ENCODE measurements at regions of chr1 and their contacts with region 1.

Region 1: GRCh38 chr1:27603681-27604578 is at the start of gene AHDC1:
- DNase-seq: peak; percentile 91 to 93
- ATAC-seq: peak; percentile 51 to 80 (median 69)
- H3K4me3 ChIP-seq: peak within 1 kb of the TSS; percentile 42 to 100 (median 93)
- H3K27ac ChIP-seq: peak within 1 kb of the TSS; percentile 89 to 100 (median 96)
- H3K4me1 ChIP-seq: peaks cover 26 to 77% (median 58%) of the 10 kb centered on the region in 9 donors
- H3K27me3 ChIP-seq: peaks cover 0 to 4% (median 0%) of the 10 kb centered on the region in 7 donors
- CTCF ChIP-seq: peak in 4 of 9 donors; percentile 14 to 37 (median 26)
- total RNA-seq, gene AHDC1: 32.2 to 53.1 (median 42.9) TPM

Region 2: DNA sequence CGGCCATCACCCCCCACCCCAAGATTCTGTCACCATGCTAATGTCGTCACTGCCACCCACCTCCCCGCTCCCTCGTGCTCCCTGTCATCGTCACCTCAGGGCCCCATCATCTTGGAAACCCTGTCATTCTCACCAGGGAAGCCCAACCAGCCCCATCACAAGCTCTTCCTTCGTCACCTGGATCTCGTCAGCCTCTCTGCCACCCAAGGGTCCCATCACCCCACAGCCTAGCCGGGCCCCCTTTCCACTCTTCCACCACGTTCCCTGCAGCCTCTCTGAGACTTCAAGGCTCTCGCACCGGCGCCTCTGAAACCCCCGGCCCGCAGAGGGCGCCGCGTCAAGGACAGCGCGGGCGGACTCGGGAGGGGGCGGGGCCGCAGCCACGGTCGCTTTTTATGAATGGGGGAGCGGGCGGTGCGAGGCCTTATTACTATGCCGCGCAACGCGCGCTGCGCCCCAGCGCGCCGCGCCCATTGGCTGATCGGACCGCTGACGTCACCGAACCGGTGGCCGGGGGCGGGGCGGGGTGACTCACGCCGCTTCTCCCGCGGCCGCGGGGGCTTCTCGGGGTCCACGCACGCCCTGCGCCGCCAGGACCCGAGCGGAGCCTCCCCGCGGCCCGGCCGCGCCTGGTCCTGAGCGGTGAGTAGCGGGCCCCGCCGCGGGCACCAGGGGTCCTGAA is 211.7 kb before region 1 on chr1 and contains the start of gene GPR3:
- intact Hi-C with region 1: loop called in 3 of 10 experiments (anchors 1 to 5 kb)
- DNase-seq: peak; percentile 92 to 93
- ATAC-seq: peak; percentile 87 to 92 (median 90)
- H3K4me3 ChIP-seq: peak within 1 kb of the TSS; percentile 26 to 69 (median 55)
- H3K27ac ChIP-seq: peak within 1 kb of the TSS; percentile 5 to 82 (median 76)
- H3K4me1 ChIP-seq: peaks cover 7 to 50% (median 36%) of the 10 kb centered on the region in 9 donors
- H3K27me3 ChIP-seq: no peaks in the 10 kb centered on the region
- CTCF ChIP-seq: peak; percentile 22 to 79 (median 58)
- total RNA-seq, gene GPR3: 0.27 to 2.0 (median 0.42) TPM in 9 of 10 donors, not detected in the other

Region 3: GRCh38 chr1:27416387-27417111 is 187.4 kb before region 1 on chr1:
- intact Hi-C with region 1: loop called in 5 of 10 experiments (anchors 1 to 10 kb)
- DNase-seq: peak in 1 of 2 donors; percentile 54
- ATAC-seq: peak in 7 of 8 donors; percentile 26 to 61 (median 45)
- H3K4me3 ChIP-seq: no peak overlapping the region
- H3K27ac ChIP-seq: peak overlapping the region in 5 of 10 donors; percentile 11 to 82 (median 67)
- H3K4me1 ChIP-seq: peaks cover 13 to 76% (median 58%) of the 10 kb centered on the region in 9 donors
- H3K27me3 ChIP-seq: no peaks in the 10 kb centered on the region
- CTCF ChIP-seq: peak; percentile 24 to 79 (median 67)

Region 4: DNA sequence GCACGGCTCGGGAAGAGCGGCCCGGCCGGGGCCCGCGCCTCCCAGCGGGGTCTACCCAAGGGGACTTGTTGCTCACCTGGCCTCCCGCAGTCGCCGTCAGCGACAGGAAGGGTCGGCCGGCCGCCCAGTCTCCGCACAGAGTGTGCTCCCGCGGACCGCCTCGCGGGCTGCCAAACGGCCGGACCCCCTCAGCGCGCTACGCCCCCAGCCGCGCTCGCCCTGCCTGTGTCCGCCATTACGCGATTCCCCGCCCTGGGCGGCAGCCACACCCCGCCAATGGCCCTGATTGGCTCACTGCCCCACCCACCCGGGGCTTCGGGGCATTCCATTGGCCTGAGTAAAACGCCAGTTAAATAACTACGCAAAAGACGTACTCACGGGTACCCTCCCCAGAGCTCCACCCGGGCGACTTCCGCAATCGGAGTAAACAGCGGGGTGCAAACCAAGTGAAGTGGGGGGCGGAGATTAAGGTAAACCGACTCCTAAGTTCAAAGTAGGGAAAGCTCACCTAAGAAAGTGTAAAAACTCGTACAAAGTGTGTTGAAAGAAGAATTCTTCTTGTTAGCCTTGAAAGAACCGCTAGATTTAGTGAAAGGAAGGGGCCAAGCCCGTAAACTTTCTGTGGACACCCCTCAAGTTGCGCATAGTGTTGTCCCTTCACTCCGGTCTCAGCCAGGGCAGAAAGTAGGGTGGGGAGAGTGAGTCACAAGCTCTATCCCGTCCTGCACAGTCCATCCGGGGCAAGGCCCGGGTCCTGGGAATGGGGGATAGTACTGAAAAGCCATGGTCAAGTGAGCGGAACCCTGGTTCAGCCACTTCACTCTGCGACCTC is 113.8 kb before region 1 on chr1 and contains the start of gene WASF2:
- intact Hi-C with region 1: loop called in 2 of 10 experiments (anchors 2 to 10 kb)
- DNase-seq: peak; percentile 96 to 98
- ATAC-seq: peak; percentile 94 to 97 (median 96)
- H3K4me3 ChIP-seq: peak within 1 kb of the TSS; percentile 82 to 100 (median 95)
- H3K27ac ChIP-seq: peak within 1 kb of the TSS; percentile 99 to 100 (median 100)
- H3K4me1 ChIP-seq: peaks cover 19 to 64% (median 57%) of the 10 kb centered on the region in 9 donors
- H3K27me3 ChIP-seq: no peaks in the 10 kb centered on the region
- CTCF ChIP-seq: peak in 2 of 9 donors; percentile 4 to 13
- total RNA-seq, gene WASF2: 41.2 to 75.4 (median 52.0) TPM

Region 5: GRCh38 chr1:27525296-27526272 is 78.3 kb before region 1 on chr1:
- intact Hi-C with region 1: loop called in 1 of 10 experiments (anchors 10 kb)
- DNase-seq: peak; percentile 87 to 89
- ATAC-seq: peak; percentile 61 to 81 (median 77)
- H3K4me3 ChIP-seq: peak overlapping the region in 9 of 10 donors; percentile 13 to 63 (median 46)
- H3K27ac ChIP-seq: peak overlapping the region; percentile 85 to 97 (median 90)
- H3K4me1 ChIP-seq: peaks cover 79 to 95% (median 90%) of the 10 kb centered on the region in 9 donors
- H3K27me3 ChIP-seq: peaks cover 0 to 6% (median 0%) of the 10 kb centered on the region in 7 donors
- CTCF ChIP-seq: no peak

Region 6: GRCh38 chr1:27568300-27569087 is 35.4 kb before region 1 on chr1:
- intact Hi-C with region 1: loop called in 4 of 10 experiments (anchors 2 to 5 kb)
- DNase-seq: peak; percentile 94 to 95
- ATAC-seq: peak; percentile 78 to 85 (median 82)
- H3K4me3 ChIP-seq: peak overlapping the region in 9 of 10 donors; percentile 21 to 50 (median 41)
- H3K27ac ChIP-seq: peak overlapping the region; percentile 48 to 98 (median 93)
- H3K4me1 ChIP-seq: peaks cover 63 to 100% (median 95%) of the 10 kb centered on the region in 9 donors
- H3K27me3 ChIP-seq: no peaks in the 10 kb centered on the region
- CTCF ChIP-seq: peak; percentile 65 to 90 (median 76)

Region 7: GRCh38 chr1:27772036-27772932 is 168.4 kb after region 1 on chr1:
- intact Hi-C with region 1: no loop called
- DNase-seq: no peak
- ATAC-seq: no peak
- H3K4me3 ChIP-seq: peak overlapping the region; percentile 8 to 100 (median 89)
- H3K27ac ChIP-seq: peak overlapping the region; percentile 57 to 99 (median 95)
- H3K4me1 ChIP-seq: peaks cover 0 to 46% (median 27%) of the 10 kb centered on the region in 9 donors
- H3K27me3 ChIP-seq: no peaks in the 10 kb centered on the region
- CTCF ChIP-seq: no peak

Measured in heart right ventricle (tissue), 16 donors.